GM12878 (cell line): ENCODE measurements at regions of chr20 and their contacts with region 1.

Region 1: GRCh38 chr20:41955999-41956705 is 338.0 kb upstream of the CHD6 start:
- DNase-seq: no peak
- ATAC-seq: peak; percentile 64
- H3K4me3 ChIP-seq: no peak overlapping the region
- H3K27ac ChIP-seq: no peak overlapping the region
- H3K4me1 ChIP-seq: no peaks in the 10 kb centered on the region
- H3K27me3 ChIP-seq: no peaks in the 10 kb centered on the region
- CTCF ChIP-seq: peak; percentile 51 to 62 (median 59)
- EP300 ChIP-seq: no peak
- POLR2A ChIP-seq: no peak
- RAD21 ChIP-seq: peak; percentile 66

Region 2: DNA sequence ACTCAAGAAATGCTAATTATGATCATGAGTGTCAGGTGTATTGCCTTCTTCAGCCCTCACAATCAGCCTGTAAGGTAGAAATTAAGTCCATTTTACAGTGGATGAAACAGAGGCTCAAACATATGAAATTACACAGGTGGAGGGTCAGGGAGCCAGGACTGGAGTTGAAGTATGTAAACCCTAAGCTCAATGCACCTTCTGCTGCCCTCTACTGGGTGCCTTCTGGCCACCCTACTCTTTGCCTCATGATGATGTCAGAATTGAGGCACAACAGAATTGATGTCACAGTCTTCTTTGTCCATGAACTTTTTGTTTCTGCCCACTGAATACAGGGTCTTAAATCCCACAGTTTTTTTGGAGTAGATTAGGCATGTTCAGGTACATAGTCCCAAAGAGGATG is 62.8 kb after region 1 on chr20:
- CTCF ChIA-PET with region 1: no interaction called
- POLR2A ChIA-PET with region 1: no interaction called
- RAD21 ChIA-PET with region 1: no interaction called
- SMC1A ChIA-PET with region 1: no interaction called
- in situ Hi-C with region 1: no loop called
- intact Hi-C with region 1: loop called (anchors 2 kb)
- DNase-seq: no peak
- ATAC-seq: peak; percentile 48; the same call in 1 of the 3 replicates
- H3K4me3 ChIP-seq: no peak overlapping the region
- H3K27ac ChIP-seq: no peak overlapping the region
- H3K4me1 ChIP-seq: no peaks in the 10 kb centered on the region
- H3K27me3 ChIP-seq: no peaks in the 10 kb centered on the region
- CTCF ChIP-seq: peak; percentile 17 to 40 (median 26); a peak in 4 of 6 replicates
- EP300 ChIP-seq: no peak
- POLR2A ChIP-seq: no peak
- RAD21 ChIP-seq: 0 out of 2 replicates have a peak, but pooled peaks have one; percentile 13

Region 3: GRCh38 chr20:42530822-42531448 is 574.8 kb after region 1 on chr20:
- CTCF ChIA-PET with region 1: interaction called, 5 read pairs
- POLR2A ChIA-PET with region 1: no interaction called
- RAD21 ChIA-PET with region 1: interaction called, 3 read pairs
- SMC1A ChIA-PET with region 1: no interaction called
- in situ Hi-C with region 1: no loop called
- intact Hi-C with region 1: loop called (anchors 2 kb)
- DNase-seq: no peak
- ATAC-seq: peak; percentile 68
- H3K4me3 ChIP-seq: no peak overlapping the region
- H3K27ac ChIP-seq: no peak overlapping the region
- H3K4me1 ChIP-seq: no peaks in the 10 kb centered on the region
- H3K27me3 ChIP-seq: no peaks in the 10 kb centered on the region; a peak in 1 of 4 replicates
- CTCF ChIP-seq: peak; percentile 58 to 65 (median 64)
- EP300 ChIP-seq: no peak
- POLR2A ChIP-seq: no peak
- RAD21 ChIP-seq: peak; percentile 61